GM12878 (cell line): ENCODE measurements at regions of chr14 and their contacts with region 1.

Region 1: DNA sequence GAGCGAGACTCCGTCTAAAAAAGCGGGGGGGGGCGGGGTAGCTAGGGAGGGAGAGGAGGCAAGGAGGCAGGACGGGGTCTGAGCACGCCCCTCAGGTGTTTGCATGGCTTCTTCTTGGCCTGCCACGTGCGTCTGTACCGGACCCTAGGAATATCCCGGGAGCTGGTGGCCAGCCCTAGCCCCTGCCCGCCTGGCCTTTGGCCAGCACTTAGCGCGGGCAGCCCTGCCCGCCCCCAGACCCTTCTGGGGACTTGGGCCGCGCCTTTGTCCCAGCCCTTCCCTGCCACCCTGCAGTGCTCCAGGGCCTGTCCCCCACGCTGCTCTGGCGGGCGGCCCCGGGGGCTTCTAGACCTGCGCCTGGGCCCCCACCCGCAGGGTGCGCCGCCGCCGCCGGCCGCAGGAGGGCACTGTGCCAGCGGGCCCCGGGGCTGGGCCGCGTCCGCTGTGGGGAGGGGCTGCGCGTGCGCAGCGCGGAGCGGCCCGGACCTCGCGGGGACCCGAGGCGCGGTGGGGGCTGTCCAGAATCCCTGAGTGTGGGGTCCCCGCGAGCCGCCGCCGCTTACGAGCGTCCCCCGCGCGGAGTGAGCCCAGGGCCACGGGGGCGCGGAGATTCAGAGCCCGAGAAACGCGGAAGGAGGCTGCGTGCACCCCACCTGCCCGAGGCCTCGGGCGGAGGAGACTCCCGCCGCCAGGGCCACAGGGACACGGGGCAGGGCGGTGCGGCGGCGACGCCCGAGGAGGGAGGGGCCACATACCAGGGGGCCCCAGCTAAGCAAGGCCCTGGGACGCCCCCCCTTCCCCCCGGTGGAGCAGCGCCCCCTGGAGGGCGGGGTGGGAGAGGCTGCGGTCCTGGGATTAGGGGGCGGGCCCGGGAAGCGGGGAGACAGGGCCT is 21.0 kb downstream of the SLC25A29 start:
- DNase-seq: no peak
- ATAC-seq: peak; percentile 96
- H3K4me3 ChIP-seq: peak overlapping the region; percentile 84
- H3K27ac ChIP-seq: peak overlapping the region; percentile 63
- H3K4me1 ChIP-seq: no peaks in the 10 kb centered on the region
- H3K27me3 ChIP-seq: no peaks in the 10 kb centered on the region
- CTCF ChIP-seq: peak; percentile 62 to 93 (median 80)
- EP300 ChIP-seq: no peak
- POLR2A ChIP-seq: peak; percentile 86
- RAD21 ChIP-seq: peak; percentile 67

Region 2: GRCh38 chr14:99879401-99880295 is 405.6 kb before region 1 on chr14:
- CTCF ChIA-PET with region 1: no interaction called
- POLR2A ChIA-PET with region 1: no interaction called
- RAD21 ChIA-PET with region 1: no interaction called
- SMC1A ChIA-PET with region 1: no interaction called
- in situ Hi-C with region 1: no loop called
- intact Hi-C with region 1: no loop called
- DNase-seq: no peak
- ATAC-seq: no peak
- H3K4me3 ChIP-seq: no peak overlapping the region
- H3K27ac ChIP-seq: no peak overlapping the region
- H3K4me1 ChIP-seq: no peaks in the 10 kb centered on the region
- H3K27me3 ChIP-seq: peaks cover 0 to 3% of the 10 kb centered on the region in 2 experiments; a peak in 1 of 4 replicates
- CTCF ChIP-seq: no peak
- EP300 ChIP-seq: no peak
- POLR2A ChIP-seq: no peak
- RAD21 ChIP-seq: no peak

Region 3: DNA sequence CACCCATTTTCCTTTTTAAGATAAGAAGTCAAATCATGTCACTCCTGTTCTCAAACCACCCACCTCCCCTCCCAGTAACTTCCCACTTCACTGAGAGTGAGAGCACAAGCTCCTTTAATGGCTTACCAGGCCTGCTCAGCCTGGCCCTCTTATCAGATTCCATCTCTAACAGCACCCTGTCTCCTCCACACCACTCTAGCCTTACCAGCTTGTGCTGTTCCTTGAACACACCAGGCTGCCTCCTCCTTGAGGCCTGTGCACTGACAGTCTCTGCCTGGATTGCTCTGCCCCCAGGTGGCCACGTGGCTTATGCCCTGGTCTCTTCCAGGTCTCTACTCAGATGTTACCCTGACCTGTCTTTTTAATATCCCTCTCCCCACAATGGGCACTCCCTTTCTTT is 260.2 kb before region 1 on chr14:
- CTCF ChIA-PET with region 1: no interaction called
- POLR2A ChIA-PET with region 1: no interaction called
- RAD21 ChIA-PET with region 1: no interaction called
- SMC1A ChIA-PET with region 1: no interaction called
- in situ Hi-C with region 1: no loop called
- intact Hi-C with region 1: no loop called
- DNase-seq: no peak
- ATAC-seq: peak; percentile 96
- H3K4me3 ChIP-seq: no peak overlapping the region
- H3K27ac ChIP-seq: no peak overlapping the region
- H3K4me1 ChIP-seq: peaks cover 5% of the 10 kb centered on the region; the same call in 1 of the 2 replicates
- H3K27me3 ChIP-seq: no peaks in the 10 kb centered on the region
- CTCF ChIP-seq: peak; percentile 44 to 66 (median 55); a peak in 5 of 6 replicates
- EP300 ChIP-seq: no peak
- POLR2A ChIP-seq: no peak
- RAD21 ChIP-seq: peak; percentile 45; the same call in 1 of the 2 replicates

Region 4: DNA sequence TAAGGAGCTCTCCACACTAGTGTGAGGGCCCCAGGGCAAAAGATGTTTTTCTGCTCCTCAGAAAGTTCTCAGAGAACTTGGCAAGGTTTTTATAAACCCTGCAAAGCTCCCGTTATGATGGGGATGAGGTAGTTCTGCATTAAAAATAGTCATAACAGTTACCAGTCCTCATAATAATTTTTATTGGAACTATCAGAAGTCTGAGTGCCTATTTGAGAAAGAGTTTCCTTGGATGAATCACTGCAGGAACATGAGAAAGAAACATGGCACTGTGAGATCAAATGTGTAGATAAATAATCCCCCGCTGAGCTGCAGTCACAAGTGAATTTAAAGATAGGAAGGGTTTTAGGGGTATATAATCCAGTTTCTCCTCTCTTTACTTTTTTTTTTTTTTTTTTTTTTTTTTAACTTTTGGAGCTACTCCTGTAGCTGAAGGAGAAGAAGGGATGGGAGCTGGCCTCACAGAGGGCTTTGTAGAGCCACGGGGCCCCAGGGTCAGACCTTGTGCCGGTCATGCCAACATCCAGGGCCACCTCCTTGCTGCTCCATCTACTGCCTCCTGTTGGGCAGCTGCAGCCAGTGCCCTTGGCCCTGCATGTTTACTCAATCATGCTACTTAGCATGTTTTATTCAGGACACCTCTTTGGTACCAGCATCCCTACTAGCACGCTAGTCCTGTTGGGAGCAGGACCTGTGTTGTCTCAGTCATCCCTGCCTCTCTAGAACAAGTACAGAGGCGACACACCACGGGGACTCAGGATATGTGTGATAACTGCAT is 180.6 kb before region 1 on chr14:
- CTCF ChIA-PET with region 1: no interaction called
- POLR2A ChIA-PET with region 1: no interaction called
- RAD21 ChIA-PET with region 1: no interaction called
- SMC1A ChIA-PET with region 1: no interaction called
- in situ Hi-C with region 1: no loop called
- intact Hi-C with region 1: no loop called
- DNase-seq: no peak
- ATAC-seq: no peak
- H3K4me3 ChIP-seq: no peak overlapping the region
- H3K27ac ChIP-seq: no peak overlapping the region
- H3K4me1 ChIP-seq: peaks cover 9% of the 10 kb centered on the region
- H3K27me3 ChIP-seq: no peaks in the 10 kb centered on the region
- CTCF ChIP-seq: peak in 2 of 3 experiments; percentile 13 to 15; a peak in 1 of 6 replicates
- EP300 ChIP-seq: no peak
- POLR2A ChIP-seq: no peak
- RAD21 ChIP-seq: no peak

Region 5: DNA sequence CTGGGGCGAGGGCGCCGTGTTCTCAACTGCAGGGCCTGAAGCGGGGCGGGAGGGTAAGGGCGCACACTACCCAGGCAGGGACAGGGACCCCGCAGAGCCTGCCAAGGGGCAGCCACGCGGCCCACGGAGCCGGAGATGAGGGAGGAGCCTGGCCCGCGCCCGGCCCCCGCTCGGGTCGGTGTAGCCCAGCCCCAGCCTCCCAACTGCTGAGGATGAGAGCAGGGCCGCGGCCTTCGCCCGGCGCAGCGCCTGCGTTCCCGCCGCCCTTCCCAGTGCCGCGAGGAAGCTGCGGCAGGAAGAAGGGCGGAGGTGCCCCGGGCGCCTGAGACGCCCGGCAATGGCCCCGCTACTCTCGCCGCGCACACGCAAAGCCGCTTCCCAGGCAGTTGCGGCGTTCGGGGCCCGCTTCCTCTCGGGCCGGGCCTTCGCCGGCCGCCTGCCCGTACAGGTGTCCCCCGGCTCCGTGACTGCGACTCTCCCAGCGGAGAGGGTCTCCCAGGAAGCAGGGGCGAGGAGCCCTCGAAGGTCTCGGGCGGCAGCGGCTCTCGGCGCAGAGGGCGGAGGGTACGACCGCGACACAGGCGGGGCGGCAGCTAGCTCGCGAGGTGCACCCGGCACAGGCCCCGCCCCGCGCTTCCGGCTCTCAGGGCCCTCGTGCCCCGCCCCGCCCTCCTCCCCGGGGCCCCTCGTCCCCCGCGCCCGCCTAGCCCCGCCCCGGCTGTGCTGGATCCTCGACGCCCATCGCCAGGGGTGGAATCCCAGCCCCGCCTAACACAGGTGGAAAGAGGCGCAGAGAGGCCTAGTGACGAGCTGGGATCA is 71.1 kb before region 1 on chr14:
- CTCF ChIA-PET with region 1: no interaction called
- POLR2A ChIA-PET with region 1: no interaction called
- RAD21 ChIA-PET with region 1: no interaction called
- SMC1A ChIA-PET with region 1: no interaction called
- in situ Hi-C with region 1: no loop called
- intact Hi-C with region 1: no loop called
- DNase-seq: no peak
- ATAC-seq: peak; percentile 98
- H3K4me3 ChIP-seq: peak overlapping the region; percentile 90
- H3K27ac ChIP-seq: peak overlapping the region; percentile 90
- H3K4me1 ChIP-seq: peaks cover 9% of the 10 kb centered on the region; the same call in 1 of the 2 replicates
- H3K27me3 ChIP-seq: no peaks in the 10 kb centered on the region
- CTCF ChIP-seq: no peak
- EP300 ChIP-seq: no peak
- POLR2A ChIP-seq: peak; percentile 97
- RAD21 ChIP-seq: no peak

Region 6: GRCh38 chr14:100239840-100240724 is 45.2 kb before region 1 on chr14:
- CTCF ChIA-PET with region 1: interaction called, 11 read pairs
- POLR2A ChIA-PET with region 1: interaction called, 8 read pairs
- RAD21 ChIA-PET with region 1: interaction called, 5 read pairs
- SMC1A ChIA-PET with region 1: no interaction called
- in situ Hi-C with region 1: no loop called
- intact Hi-C with region 1: no loop called
- DNase-seq: no peak
- ATAC-seq: peak; percentile 52
- H3K4me3 ChIP-seq: peak overlapping the region; percentile 95
- H3K27ac ChIP-seq: peak overlapping the region; percentile 74
- H3K4me1 ChIP-seq: no peaks in the 10 kb centered on the region
- H3K27me3 ChIP-seq: no peaks in the 10 kb centered on the region
- CTCF ChIP-seq: peak; percentile 58 to 71 (median 71); a peak in 5 of 6 replicates
- EP300 ChIP-seq: no peak
- POLR2A ChIP-seq: peak; percentile 60; the same call in 1 of the 2 replicates
- RAD21 ChIP-seq: peak; percentile 29; the same call in 1 of the 2 replicates

Region 7: DNA sequence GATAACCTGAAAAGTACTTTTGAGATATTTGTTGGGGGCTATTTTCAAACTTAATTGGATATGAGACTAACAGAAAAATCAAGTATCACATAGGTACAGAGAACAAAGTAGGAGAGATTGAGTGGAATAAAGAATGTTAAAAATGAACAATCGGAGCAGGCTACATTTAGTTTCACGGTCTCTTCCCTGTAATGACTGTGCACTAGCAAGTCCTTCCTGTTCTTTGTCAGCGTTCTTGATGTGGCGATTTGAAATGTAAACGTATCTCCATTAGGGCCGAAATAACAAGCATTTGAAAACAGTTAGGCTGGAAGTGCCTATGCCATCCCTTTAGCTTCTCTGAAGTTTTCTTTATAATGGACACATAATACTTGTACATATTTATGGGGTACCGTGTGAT is 10.1 kb before region 1 on chr14:
- CTCF ChIA-PET with region 1: interaction called, 13 read pairs
- POLR2A ChIA-PET with region 1: no interaction called
- RAD21 ChIA-PET with region 1: no interaction called
- SMC1A ChIA-PET with region 1: interaction called, 5 read pairs
- in situ Hi-C with region 1: no loop called
- intact Hi-C with region 1: no loop called
- DNase-seq: no peak
- ATAC-seq: no peak
- H3K4me3 ChIP-seq: no peak overlapping the region
- H3K27ac ChIP-seq: no peak overlapping the region
- H3K4me1 ChIP-seq: 0 out of 2 replicates have a peak, but pooled peaks cover 5% of the 10 kb centered on the region
- H3K27me3 ChIP-seq: no peaks in the 10 kb centered on the region
- CTCF ChIP-seq: no peak
- EP300 ChIP-seq: no peak
- POLR2A ChIP-seq: no peak
- RAD21 ChIP-seq: no peak

Region 8: DNA sequence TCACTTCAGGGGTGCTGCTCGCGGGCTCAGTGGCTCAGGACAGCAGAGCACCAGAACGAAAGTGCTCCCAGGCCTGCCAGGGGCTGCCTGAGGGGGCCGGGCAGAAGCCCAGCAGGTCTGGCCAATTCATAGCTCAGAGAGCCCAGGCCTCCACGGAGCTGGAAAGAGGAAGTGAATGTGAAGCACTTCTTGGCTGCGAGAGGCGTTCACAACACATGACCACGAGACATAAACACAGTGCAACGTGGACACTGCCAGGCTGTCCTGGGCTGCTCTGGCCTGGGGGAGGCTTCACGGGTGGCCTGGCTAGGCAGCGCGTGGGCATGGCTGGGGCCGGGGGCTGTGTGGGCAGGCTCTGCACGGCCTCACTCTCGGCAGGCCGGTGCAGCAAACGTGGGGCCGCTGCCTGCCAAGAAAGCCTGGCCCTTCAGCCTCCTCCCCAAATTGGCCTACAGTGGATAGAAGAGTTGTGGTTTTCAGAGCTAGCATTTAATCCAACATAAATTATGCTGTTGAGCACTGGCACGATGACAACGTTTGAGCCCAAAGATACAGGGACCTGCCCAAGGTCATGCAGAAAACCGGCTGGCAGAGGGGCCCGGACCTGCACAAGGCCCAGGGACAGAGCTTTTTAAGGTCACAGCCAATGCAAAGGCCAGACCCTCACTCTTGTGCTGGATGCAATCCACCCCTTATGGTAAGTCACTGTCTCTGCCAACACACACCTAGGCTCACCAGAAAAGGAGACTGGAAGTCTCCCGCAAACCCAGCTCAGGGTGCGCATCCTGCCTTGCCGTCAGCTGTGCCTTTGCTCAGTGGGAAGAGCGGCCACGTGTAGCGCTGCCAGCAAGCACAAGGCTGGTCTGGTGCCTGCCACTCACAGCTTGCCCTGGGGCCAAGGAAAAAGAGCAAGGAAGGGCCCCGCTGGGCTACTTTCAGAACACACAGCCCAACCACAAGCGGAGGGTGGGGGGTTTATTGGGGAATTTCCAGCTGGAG is 12.3 kb after region 1 on chr14:
- CTCF ChIA-PET with region 1: interaction called, 39 read pairs
- POLR2A ChIA-PET with region 1: interaction called, 5 read pairs
- RAD21 ChIA-PET with region 1: interaction called, 4 read pairs
- SMC1A ChIA-PET with region 1: interaction called, 9 read pairs
- in situ Hi-C with region 1: no loop called
- intact Hi-C with region 1: no loop called
- DNase-seq: peak; percentile 35
- ATAC-seq: peak; percentile 96
- H3K4me3 ChIP-seq: no peak overlapping the region
- H3K27ac ChIP-seq: no peak overlapping the region
- H3K4me1 ChIP-seq: peaks cover 16% of the 10 kb centered on the region
- H3K27me3 ChIP-seq: no peaks in the 10 kb centered on the region
- CTCF ChIP-seq: no peak
- EP300 ChIP-seq: no peak
- POLR2A ChIP-seq: 0 out of 2 replicates have a peak, but pooled peaks have one; percentile 19
- RAD21 ChIP-seq: no peak